ENCODE measurements at regions of chr5 and their contacts with region 1.

Region 1: DNA sequence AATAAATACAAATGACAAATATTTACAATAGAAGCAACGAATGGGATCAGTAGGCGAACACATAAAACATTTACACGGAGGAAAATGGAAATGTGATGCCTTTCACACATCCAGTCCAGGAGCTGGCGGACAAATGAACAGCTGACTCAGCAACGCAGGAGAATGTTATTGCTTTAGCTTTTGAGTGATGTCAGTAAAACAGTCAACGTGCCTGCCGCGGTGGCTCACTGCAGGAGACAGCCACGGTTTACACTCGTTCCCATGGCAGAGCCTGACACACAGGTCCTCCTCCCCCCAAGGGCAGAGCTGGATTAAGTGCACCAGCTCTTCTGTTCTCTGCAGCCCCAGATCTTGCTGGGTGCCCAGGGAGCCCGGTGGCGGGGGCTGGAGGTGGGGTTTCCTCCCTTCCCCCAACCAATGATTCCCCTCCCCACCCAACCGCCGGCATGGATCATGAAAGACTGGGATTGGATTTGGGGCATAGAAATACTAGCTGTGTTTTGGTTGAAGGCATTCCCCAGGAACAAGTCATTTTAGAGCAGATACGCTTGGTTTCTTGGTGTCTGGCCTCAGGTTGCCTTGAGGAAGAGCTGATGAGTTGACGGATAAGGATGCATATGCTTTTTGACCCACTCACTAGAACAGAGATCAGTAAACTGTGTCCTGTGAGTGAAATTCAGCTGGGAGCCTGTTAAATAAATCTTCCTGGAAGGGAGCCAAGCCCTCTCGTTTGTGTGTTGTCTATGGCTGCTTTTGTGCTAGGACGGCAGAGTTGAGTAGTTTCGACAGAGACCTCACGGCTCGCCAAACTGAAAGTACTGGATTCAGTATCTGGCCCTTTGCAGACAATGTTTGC is 12.5 kb downstream of the STC2 start:
- DNase-seq: peak in 1 of 2 donors; percentile 27
- ATAC-seq: peak; percentile 31 to 47
- H3K4me3 ChIP-seq: no peak overlapping the region
- H3K27ac ChIP-seq: peak overlapping the region in 2 of 4 donors; percentile 19 to 34
- H3K4me1 ChIP-seq: peaks cover 7 to 8% of the 10 kb centered on the region in 2 donors
- H3K27me3 ChIP-seq: no peaks in the 10 kb centered on the region
- CTCF ChIP-seq: no peak
- POLR2A ChIP-seq: no peak

Region 2: DNA sequence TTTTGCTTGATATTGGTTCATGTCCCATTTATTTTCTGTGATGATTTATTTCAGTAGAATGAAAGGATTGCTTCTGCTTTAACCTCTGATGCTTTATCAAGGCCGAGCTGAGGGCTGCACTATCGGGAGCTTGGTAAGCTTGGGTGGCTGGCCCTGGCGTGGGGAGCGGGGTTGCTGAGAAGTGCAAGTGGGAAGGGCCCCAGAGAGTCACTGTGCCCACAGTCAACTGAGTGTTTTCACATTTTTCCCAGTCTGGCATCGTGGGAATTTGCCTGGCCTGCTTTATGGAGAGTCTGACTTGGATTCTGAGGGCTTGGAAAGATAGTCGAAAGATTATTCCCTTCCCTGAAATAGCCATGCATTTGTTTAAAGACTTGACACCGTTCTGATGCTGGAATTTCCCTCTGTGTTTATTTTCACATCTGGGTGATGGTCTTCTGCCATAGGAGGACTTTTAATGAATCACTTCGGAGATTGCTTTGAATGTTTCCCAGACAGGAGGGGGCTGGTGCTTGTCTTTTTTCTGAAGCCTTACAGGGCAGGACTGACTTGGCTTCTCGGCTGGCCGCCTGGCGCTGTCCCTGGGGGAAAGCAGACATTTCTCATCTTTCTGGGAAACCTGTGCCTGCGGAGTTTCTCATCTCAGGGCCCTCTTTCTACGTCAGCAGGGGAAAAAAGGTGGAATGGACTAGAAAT is 161.8 kb after region 1 on chr5:
- in situ Hi-C with region 1: no loop called
- intact Hi-C with region 1: no loop called
- DNase-seq: no peak
- ATAC-seq: no peak
- H3K4me3 ChIP-seq: no peak overlapping the region
- H3K27ac ChIP-seq: no peak overlapping the region
- H3K4me1 ChIP-seq: peaks cover 11 to 16% of the 10 kb centered on the region in 2 donors
- H3K27me3 ChIP-seq: no peaks in the 10 kb centered on the region
- CTCF ChIP-seq: no peak
- POLR2A ChIP-seq: no peak

Region 3: GRCh38 chr5:173581408-173582215 is 265.9 kb after region 1 on chr5:
- in situ Hi-C with region 1: loop called in 1 of 4 experiments (anchors 25 kb)
- intact Hi-C with region 1: no loop called
- DNase-seq: no peak
- ATAC-seq: no peak
- H3K4me3 ChIP-seq: no peak overlapping the region
- H3K27ac ChIP-seq: no peak overlapping the region
- H3K4me1 ChIP-seq: no peaks in the 10 kb centered on the region
- H3K27me3 ChIP-seq: no peaks in the 10 kb centered on the region
- CTCF ChIP-seq: peak; percentile 28 to 65 (median 56)
- POLR2A ChIP-seq: no peak

Region 4: GRCh38 chr5:173984218-173984617 is 668.5 kb after region 1 on chr5:
- in situ Hi-C with region 1: loop called in 1 of 4 experiments (anchors 25 kb)
- intact Hi-C with region 1: loop called (anchors 10 kb)
- DNase-seq: no peak
- ATAC-seq: peak; percentile 52 to 53
- H3K4me3 ChIP-seq: no peak overlapping the region
- H3K27ac ChIP-seq: no peak overlapping the region
- H3K4me1 ChIP-seq: no peaks in the 10 kb centered on the region
- H3K27me3 ChIP-seq: no peaks in the 10 kb centered on the region
- CTCF ChIP-seq: peak; percentile 14 to 48 (median 34)
- POLR2A ChIP-seq: no peak

Measured in gastrocnemius medialis (tissue), 4 donors.